ENCODE measurements at regions of chr4 and their contacts with region 1.

Region 1: DNA sequence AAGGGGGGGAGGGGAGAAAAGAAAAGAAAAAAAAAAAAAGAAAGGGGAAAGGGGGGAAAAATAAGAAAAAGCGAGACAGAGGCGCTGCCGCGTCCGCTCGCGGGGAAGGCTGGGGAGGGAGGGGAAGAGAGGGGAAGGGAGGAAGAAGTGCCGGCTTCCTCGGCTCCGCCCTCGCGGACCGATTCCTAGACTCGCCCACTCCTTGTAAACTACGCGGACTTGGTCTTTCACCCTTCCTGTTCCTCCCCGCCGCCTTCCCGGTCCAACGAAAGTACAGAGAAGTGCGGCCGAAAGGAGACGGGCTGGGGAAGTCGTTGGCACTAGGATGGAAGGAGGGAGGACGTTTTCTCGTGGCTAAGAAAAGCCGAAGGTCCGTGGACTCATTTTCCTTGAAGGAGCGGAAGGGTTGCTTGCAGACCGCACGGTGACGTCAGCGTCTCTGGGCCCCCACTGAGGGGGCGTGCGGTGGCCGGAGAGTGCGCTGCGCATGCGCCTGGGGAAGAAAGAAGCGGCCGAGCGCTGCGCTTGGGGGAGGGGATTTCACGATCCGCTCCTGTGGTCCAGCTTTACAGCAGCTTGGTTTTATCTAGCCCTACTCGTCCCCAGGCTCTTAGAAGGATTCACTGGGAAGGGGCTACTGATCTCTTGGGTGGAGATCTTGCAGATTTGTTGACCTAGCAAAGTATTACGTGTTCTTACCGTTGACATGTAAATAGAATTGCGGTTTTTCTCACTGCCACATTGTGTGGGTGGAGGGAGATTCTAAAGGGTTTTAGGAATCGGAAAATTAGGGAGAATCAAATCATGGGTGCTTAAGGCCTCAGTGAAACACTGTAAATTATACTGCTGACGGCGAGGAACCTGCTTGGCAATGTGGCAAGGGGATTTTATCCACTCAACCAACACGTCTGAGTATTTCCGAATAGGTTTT is at the start of gene CCNI:
- DNase-seq: peak; percentile 96
- H3K4me3 ChIP-seq: peak within 1 kb of the TSS; percentile 73 to 92 (median 83)
- H3K27ac ChIP-seq: peak within 1 kb of the TSS; percentile 96
- H3K4me1 ChIP-seq: peaks cover 14% of the 10 kb centered on the region
- H3K27me3 ChIP-seq: no peaks in the 10 kb centered on the region
- CTCF ChIP-seq: no peak
- total RNA-seq, gene CCNI: 177 to 250 TPM

Region 2: DNA sequence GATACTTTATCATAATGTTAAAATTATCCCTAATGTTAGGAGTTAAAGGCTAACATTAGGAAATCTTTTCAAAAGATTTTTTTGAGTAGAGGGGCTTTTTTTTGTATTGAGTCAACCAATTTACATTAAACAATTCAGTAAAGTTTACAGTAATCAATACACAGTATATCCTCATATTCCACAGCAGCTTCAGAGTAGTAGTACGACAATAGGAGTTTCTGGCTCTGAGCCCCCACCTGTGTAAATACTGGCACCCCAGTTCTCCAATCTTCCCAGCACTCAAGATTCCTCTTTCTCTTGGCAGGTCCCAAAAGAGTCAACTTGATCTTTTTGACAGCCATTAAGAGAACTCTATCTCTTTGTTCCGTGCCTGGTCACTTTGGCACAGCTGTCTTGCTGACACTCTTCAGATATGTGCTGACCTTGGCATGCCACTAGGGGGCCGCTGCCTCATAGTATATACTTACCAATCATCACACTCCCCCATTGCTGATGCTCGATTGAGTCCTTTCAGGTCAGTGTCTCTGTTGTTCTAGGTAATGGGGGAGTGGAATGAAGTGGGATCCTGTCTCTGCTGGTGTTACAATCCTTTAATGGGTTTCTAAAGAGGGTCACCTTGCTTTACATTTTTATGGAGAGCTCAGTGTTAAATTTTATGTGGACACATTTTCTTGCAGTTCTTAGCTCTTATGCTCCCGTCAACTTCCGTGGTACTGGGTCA is 19.1 kb after region 1 on chr4:
- CTCF ChIA-PET with region 1: no interaction called
- dilution Hi-C with region 1: no loop called
- in situ Hi-C with region 1: no loop called
- intact Hi-C with region 1: loop called (anchors 1 kb)
- DNase-seq: peak; percentile 53
- H3K4me3 ChIP-seq: no peak overlapping the region
- H3K27ac ChIP-seq: peak overlapping the region; percentile 26
- H3K4me1 ChIP-seq: peaks cover 43% of the 10 kb centered on the region
- H3K27me3 ChIP-seq: no peaks in the 10 kb centered on the region
- CTCF ChIP-seq: peak; percentile 94

Region 3: GRCh38 chr4:77358315-77358928 is 282.3 kb after region 1 on chr4:
- CTCF ChIA-PET with region 1: no interaction called
- dilution Hi-C with region 1: no loop called
- in situ Hi-C with region 1: no loop called
- intact Hi-C with region 1: loop called (anchors 10 kb)
- DNase-seq: peak; percentile 37
- H3K4me3 ChIP-seq: no peak overlapping the region
- H3K27ac ChIP-seq: no peak overlapping the region
- H3K4me1 ChIP-seq: peaks cover 10% of the 10 kb centered on the region
- H3K27me3 ChIP-seq: no peaks in the 10 kb centered on the region
- CTCF ChIP-seq: peak; percentile 53 to 74

Measured in mammary epithelial cell (primary cell).